Activated CD4-positive, alpha-beta memory T cell treated with anti-CD3 and anti-CD28 coated beads for 36 hours (primary cell): ENCODE measurements at regions of chr4 and their contacts with region 1.

Region 1: GRCh38 chr4:99808260-99808857 is 8.3 kb upstream of the DAPP1 start:
- DNase-seq: peak; percentile 85
- H3K4me3 Mint-ChIP-seq: no peak overlapping the region
- H3K27ac Mint-ChIP-seq: no peak overlapping the region
- H3K4me1 Mint-ChIP-seq: no peaks in the 10 kb centered on the region
- H3K27me3 Mint-ChIP-seq: peaks cover 3% of the 10 kb centered on the region

Region 2: GRCh38 chr4:99462875-99463464 is 345.4 kb before region 1 on chr4:
- CTCF ChIA-PET with region 1: interaction called, 17 read pairs
- POLR2A ChIA-PET with region 1: no interaction called
- intact Hi-C with region 1: no loop called
- DNase-seq: peak; percentile 63
- H3K4me3 Mint-ChIP-seq: no peak overlapping the region
- H3K27ac Mint-ChIP-seq: no peak overlapping the region
- H3K4me1 Mint-ChIP-seq: no peaks in the 10 kb centered on the region
- H3K27me3 Mint-ChIP-seq: peaks cover 5% of the 10 kb centered on the region

Region 3: GRCh38 chr4:99563310-99564186 is 244.8 kb before region 1 on chr4 and contains the start of gene TRMT10A:
- CTCF ChIA-PET with region 1: interaction called, 35 read pairs
- POLR2A ChIA-PET with region 1: interaction called, 6 read pairs
- intact Hi-C with region 1: loop called (anchors 1 kb)
- DNase-seq: peak; percentile 98
- H3K4me3 Mint-ChIP-seq: peak within 1 kb of the TSS; percentile 93
- H3K27ac Mint-ChIP-seq: peak within 1 kb of the TSS; percentile 98
- H3K4me1 Mint-ChIP-seq: peaks cover 6% of the 10 kb centered on the region
- H3K27me3 Mint-ChIP-seq: peaks cover 7% of the 10 kb centered on the region
- total RNA-seq, gene TRMT10A: 5.6 to 8.9 TPM

Region 4: DNA sequence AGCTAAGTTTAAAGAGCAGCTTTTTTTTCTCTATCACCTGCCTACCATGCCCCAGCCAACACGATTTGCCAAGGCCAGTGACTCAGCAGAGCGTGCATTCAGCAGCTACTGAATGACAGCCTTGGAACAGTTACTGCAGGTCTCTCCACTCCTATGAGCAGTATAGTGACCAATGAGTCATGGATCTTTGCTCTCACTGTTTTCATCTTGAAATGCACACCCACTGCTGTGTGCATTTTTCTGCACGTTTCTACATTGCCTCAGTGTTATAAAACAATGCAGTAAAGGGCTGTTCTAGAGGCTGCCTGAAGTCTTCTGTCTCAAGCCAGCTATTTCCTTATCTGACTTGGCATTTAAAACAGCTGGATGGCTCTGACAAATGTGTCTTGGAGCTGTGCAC is 84.7 kb before region 1 on chr4:
- CTCF ChIA-PET with region 1: interaction called, 7 read pairs
- POLR2A ChIA-PET with region 1: no interaction called
- intact Hi-C with region 1: loop called (anchors 5 kb)
- DNase-seq: peak; percentile 45
- H3K4me3 Mint-ChIP-seq: no peak overlapping the region
- H3K27ac Mint-ChIP-seq: no peak overlapping the region
- H3K4me1 Mint-ChIP-seq: no peaks in the 10 kb centered on the region
- H3K27me3 Mint-ChIP-seq: peaks cover 2% of the 10 kb centered on the region

Region 5: GRCh38 chr4:99847362-99847976 is 39.1 kb after region 1 on chr4:
- CTCF ChIA-PET with region 1: interaction called, 20 read pairs
- POLR2A ChIA-PET with region 1: interaction called, 3 read pairs
- intact Hi-C with region 1: no loop called
- DNase-seq: peak; percentile 47
- H3K4me3 Mint-ChIP-seq: peak overlapping the region; percentile 59
- H3K27ac Mint-ChIP-seq: peak overlapping the region; percentile 95
- H3K4me1 Mint-ChIP-seq: peaks cover 74% of the 10 kb centered on the region
- H3K27me3 Mint-ChIP-seq: no peaks in the 10 kb centered on the region

Region 6: DNA sequence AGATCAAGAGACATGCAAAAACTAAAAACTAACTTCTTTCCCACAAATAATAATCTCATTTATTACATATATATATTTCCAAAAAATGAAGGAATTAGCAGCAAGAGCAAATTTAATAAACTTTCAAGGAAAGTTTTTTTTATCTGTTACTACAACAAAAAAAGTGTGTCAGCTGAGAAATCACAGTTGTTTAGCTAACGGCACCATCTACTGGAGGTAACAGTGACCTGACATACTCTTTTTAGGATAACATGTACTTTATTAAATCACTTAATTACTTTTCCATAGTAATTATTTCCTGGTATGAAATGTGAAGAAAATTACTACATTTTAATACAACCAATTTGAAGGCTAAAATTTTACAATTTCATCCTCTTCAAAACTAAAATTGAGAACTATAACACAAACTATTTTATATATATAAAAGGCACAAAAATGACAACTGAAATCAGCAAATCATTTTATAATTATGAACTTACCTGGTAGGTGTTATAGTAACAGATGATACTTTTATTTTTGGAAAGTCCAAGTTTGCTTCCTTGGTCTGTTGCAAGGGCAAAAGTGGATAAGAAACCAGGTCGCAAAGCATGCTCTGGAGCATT is 76.8 kb after region 1 on chr4:
- CTCF ChIA-PET with region 1: interaction called, 73 read pairs
- POLR2A ChIA-PET with region 1: interaction called, 4 read pairs
- intact Hi-C with region 1: loop called (anchors 1 kb)
- DNase-seq: peak; percentile 19
- H3K4me3 Mint-ChIP-seq: no peak overlapping the region
- H3K27ac Mint-ChIP-seq: no peak overlapping the region
- H3K4me1 Mint-ChIP-seq: peaks cover 6% of the 10 kb centered on the region
- H3K27me3 Mint-ChIP-seq: no peaks in the 10 kb centered on the region

Region 7: GRCh38 chr4:100060765-100061416 is 252.5 kb after region 1 on chr4:
- CTCF ChIA-PET with region 1: interaction called, 3 read pairs
- POLR2A ChIA-PET with region 1: no interaction called
- intact Hi-C with region 1: loop called (anchors 5 kb)
- DNase-seq: no peak
- H3K4me3 Mint-ChIP-seq: no peak overlapping the region
- H3K27ac Mint-ChIP-seq: no peak overlapping the region
- H3K4me1 Mint-ChIP-seq: no peaks in the 10 kb centered on the region
- H3K27me3 Mint-ChIP-seq: no peaks in the 10 kb centered on the region